ENCODE measurements at regions of chr12 and their contacts with region 1.

Region 1: GRCh38 chr12:71551529-71551928 is 111.9 kb downstream of the LGR5 start:
- DNase-seq: peak; percentile 44 to 62 (median 58)
- H3K4me3 ChIP-seq: peak overlapping the region in 2 of 7 experiments; percentile 11 to 26
- H3K27ac ChIP-seq: no peak overlapping the region
- H3K4me1 ChIP-seq: peaks cover 0 to 10% (median 3%) of the 10 kb centered on the region in 4 experiments
- H3K27me3 ChIP-seq: no peaks in the 10 kb centered on the region

Region 2: DNA sequence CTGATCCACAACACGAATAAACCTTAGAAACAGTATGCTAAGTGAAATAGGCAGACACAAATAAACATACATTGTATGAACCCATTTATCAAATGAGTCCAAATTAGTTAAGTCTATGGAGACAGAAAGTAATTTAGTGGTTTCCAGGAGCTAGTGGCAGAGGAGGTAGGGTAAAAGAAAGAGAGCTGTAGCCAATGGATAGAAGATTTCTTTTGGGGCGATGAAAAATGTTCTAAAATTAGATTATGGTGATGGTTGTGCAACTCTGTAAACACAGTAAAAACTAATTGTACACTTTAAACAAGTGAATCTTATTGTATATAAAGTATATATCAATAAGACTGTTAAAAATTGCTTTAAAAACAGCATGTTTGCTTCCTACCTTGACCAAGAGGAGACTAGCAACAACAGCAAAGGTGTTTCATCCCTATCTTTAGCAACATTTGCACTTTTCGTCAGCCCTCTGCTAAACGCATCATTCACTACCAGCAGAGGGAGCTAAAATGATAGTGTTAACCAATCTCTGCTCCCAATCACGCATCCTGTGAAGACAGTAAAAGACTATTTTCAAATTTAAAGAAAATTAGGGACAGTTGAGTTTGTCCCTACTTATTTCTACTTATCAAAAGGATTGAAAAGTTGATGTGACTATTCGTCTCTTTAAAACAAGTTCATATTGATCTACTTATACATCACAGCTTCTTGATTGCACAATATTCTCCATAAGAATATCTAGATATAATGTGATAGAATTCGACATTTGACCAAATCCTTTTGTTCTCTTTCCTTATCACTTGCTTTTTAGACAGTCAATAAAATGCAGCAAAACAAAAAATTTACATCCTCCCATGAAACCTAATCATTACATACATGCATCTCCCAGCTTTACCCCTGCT is 135.9 kb before region 1 on chr12:
- CTCF ChIA-PET with region 1: interaction called, 65 read pairs
- POLR2A ChIA-PET with region 1: no interaction called
- DNase-seq: peak; percentile 50 to 69 (median 60)
- H3K4me3 ChIP-seq: no peak overlapping the region
- H3K27ac ChIP-seq: no peak overlapping the region
- H3K4me1 ChIP-seq: no peaks in the 10 kb centered on the region
- H3K27me3 ChIP-seq: no peaks in the 10 kb centered on the region

Region 3: DNA sequence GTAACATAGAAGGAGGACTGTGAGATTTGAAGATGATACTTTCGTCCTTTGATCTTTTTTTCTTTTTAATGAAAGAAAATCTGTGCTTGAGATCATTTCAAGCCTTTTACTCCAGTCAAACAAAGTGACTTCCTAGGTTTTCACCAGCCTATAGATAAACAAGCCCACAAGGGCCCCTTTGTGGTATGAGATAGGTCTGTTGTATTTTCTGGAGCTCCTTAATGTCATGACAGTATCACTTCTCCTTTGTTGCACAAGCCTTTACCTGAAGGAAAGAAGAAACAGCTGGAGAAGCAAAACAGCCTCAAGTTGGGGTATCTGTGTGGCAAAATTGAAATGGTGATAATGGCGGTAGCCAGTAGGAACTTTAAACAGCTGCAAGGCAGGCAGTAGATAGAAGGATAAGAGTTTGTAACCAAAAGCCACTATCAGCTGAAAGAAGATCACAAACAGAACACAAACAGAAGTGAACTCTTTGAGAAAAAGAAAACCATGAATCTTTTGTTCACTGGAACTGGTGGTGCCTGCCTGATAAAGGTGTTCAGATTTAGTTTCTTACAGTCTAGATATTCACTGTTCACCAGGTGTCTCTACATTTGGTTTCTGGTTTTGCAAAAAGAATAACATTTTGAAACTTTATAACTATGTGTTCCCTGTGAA is 15.1 kb before region 1 on chr12:
- CTCF ChIA-PET with region 1: interaction called, 21 read pairs
- POLR2A ChIA-PET with region 1: no interaction called
- DNase-seq: peak in 2 of 3 donors; percentile 11 to 40
- H3K4me3 ChIP-seq: no peak overlapping the region
- H3K27ac ChIP-seq: no peak overlapping the region
- H3K4me1 ChIP-seq: peaks cover 0 to 7% (median 5%) of the 10 kb centered on the region in 4 experiments
- H3K27me3 ChIP-seq: no peaks in the 10 kb centered on the region

Region 4: GRCh38 chr12:71594214-71594948 is 42.9 kb after region 1 on chr12:
- CTCF ChIA-PET with region 1: no interaction called
- POLR2A ChIA-PET with region 1: no interaction called
- DNase-seq: peak in 1 of 3 donors; percentile 3
- H3K4me3 ChIP-seq: no peak overlapping the region
- H3K27ac ChIP-seq: no peak overlapping the region
- H3K4me1 ChIP-seq: no peaks in the 10 kb centered on the region
- H3K27me3 ChIP-seq: no peaks in the 10 kb centered on the region

Region 5: DNA sequence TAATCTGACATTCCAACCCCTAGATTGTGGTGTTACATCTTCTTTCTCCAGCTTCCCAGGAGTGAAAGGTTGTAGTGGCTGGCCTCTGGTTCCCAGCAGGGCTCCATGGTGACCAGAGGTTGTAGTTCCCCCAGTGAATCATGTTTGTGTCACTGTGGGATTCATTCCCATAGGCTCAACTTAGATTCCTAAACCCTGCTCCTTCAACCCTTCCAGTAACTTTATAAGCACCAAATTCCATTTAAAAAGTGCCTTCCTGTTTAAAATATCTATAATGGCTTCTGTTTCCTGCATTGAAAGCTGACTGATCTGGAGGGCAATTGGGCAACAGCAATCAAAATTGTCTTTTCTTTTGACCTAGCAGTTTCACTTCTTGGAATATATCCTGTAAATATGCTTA is 247.6 kb after region 1 on chr12:
- CTCF ChIA-PET with region 1: no interaction called
- POLR2A ChIA-PET with region 1: no interaction called
- DNase-seq: no peak
- H3K4me3 ChIP-seq: no peak overlapping the region
- H3K27ac ChIP-seq: no peak overlapping the region
- H3K4me1 ChIP-seq: peaks cover 0 to 14% (median 2%) of the 10 kb centered on the region in 4 experiments
- H3K27me3 ChIP-seq: no peaks in the 10 kb centered on the region

Measured in common myeloid progenitor, CD34-positive (primary cell).